Activated CD8-positive, alpha-beta memory T cell treated with anti-CD3 and anti-CD28 coated beads, Interleukin-2, amount 10 ng/mL, durations not matched to agents 7 days and 5 days (primary cell): ENCODE measurements at regions of chr2 and their contacts with region 1.

Region 1: DNA sequence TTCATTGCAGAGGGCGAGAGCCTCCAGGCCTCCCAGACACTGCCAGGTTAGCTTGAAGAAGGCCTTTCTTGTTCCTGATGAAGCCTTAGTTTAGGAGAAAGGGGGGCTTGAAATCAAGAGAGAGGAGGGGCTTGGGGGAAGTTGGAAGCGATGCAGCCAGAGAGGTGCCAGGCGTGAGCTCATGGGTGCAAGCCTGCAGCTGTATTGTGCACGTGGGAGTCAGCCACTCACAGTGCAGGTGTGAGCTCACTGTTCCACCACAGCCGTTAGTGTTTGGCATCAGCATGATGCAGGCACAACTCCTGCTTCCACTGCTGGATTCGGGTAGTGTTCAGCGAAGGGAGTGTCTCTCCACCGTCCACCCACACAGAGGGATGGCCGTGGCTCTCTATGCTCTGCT is 68.4 kb upstream of the ALPP start:
- DNase-seq: peak; percentile 61
- ATAC-seq: peak; percentile 63
- H3K4me3 Mint-ChIP-seq: no peak overlapping the region
- H3K27ac Mint-ChIP-seq: peak overlapping the region; percentile 82
- H3K4me1 Mint-ChIP-seq: peaks cover 56% of the 10 kb centered on the region
- H3K27me3 Mint-ChIP-seq: no peaks in the 10 kb centered on the region

Region 2: DNA sequence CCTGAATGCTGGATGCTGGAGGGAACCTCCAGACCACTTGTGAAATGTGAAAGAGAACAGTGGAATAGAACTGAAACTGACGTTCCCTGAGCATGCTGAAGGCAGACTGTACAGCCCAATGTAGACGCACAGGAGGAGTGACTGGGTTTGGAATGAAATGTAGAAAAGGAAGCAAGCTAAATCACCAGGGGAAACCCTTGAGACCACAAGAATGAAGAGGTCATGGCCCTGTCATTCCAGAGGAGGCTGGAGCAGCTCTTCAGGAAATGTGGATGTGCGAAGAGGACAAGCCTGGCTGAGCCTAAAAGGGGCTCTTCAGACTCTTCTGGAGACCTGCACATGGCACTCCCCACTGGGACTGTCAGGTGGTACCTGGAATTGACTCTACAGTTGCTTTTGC is 50.0 kb before region 1 on chr2:
- CTCF ChIA-PET with region 1: no interaction called
- DNase-seq: no peak
- ATAC-seq: no peak
- H3K4me3 Mint-ChIP-seq: no peak overlapping the region
- H3K27ac Mint-ChIP-seq: no peak overlapping the region
- H3K4me1 Mint-ChIP-seq: no peaks in the 10 kb centered on the region
- H3K27me3 Mint-ChIP-seq: no peaks in the 10 kb centered on the region

Region 3: GRCh38 chr2:232292395-232293154 is 17.5 kb before region 1 on chr2:
- CTCF ChIA-PET with region 1: interaction called, 25 read pairs
- DNase-seq: peak; percentile 78
- ATAC-seq: peak; percentile 84
- H3K4me3 Mint-ChIP-seq: no peak overlapping the region
- H3K27ac Mint-ChIP-seq: no peak overlapping the region
- H3K4me1 Mint-ChIP-seq: no peaks in the 10 kb centered on the region
- H3K27me3 Mint-ChIP-seq: no peaks in the 10 kb centered on the region

Region 4: GRCh38 chr2:232321156-232321816 is 11.2 kb after region 1 on chr2:
- CTCF ChIA-PET with region 1: interaction called, 40 read pairs
- DNase-seq: peak; percentile 88
- ATAC-seq: peak; percentile 93
- H3K4me3 Mint-ChIP-seq: peak overlapping the region; percentile 47
- H3K27ac Mint-ChIP-seq: peak overlapping the region; percentile 83
- H3K4me1 Mint-ChIP-seq: peaks cover 48% of the 10 kb centered on the region
- H3K27me3 Mint-ChIP-seq: no peaks in the 10 kb centered on the region